GM12878 (cell line): ENCODE measurements at regions of chr2 and their contacts with region 1.

Region 1: DNA sequence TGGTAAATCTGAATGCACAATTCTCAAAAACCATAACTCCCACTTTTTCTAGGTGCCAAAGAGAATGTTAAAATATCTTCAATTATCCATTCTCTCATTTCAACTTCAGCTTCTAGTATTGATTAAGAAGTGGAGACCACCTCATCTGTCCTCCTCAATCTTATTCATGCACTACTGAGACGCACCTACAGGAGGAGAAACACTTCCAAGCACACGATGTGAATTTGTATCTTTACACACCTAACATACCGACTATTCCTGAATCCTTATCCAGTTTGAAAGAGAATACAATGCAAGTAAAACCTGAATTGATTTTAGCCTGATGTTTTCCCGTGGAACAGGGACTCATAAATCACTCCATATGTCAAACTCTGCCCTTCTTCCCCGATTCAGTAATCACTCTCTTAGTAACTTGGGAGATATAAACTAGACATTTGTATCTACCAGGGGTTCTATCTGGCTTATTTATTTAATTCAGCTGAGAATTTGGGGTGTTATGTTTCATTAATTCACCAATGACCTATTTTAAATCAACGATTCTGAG is 101.0 kb downstream of the MREG start:
- DNase-seq: no peak
- ATAC-seq: no peak
- H3K4me3 ChIP-seq: no peak overlapping the region
- H3K27ac ChIP-seq: no peak overlapping the region
- H3K4me1 ChIP-seq: peaks cover 10% of the 10 kb centered on the region; the same call in 1 of the 2 replicates
- H3K27me3 ChIP-seq: no peaks in the 10 kb centered on the region
- CTCF ChIP-seq: no peak
- EP300 ChIP-seq: no peak
- POLR2A ChIP-seq: no peak
- RAD21 ChIP-seq: no peak

Region 2: GRCh38 chr2:215454519-215455246 is 457.7 kb before region 1 on chr2:
- CTCF ChIA-PET with region 1: interaction called, 14 read pairs
- POLR2A ChIA-PET with region 1: no interaction called
- RAD21 ChIA-PET with region 1: interaction called, 5 read pairs
- SMC1A ChIA-PET with region 1: interaction called, 30 read pairs
- in situ Hi-C with region 1: loop called (anchors 25 kb)
- intact Hi-C with region 1: no loop called
- DNase-seq: no peak
- ATAC-seq: peak; percentile 67
- H3K4me3 ChIP-seq: no peak overlapping the region
- H3K27ac ChIP-seq: no peak overlapping the region
- H3K4me1 ChIP-seq: no peaks in the 10 kb centered on the region
- H3K27me3 ChIP-seq: no peaks in the 10 kb centered on the region
- CTCF ChIP-seq: peak; percentile 71 to 81 (median 71)
- EP300 ChIP-seq: no peak
- POLR2A ChIP-seq: no peak
- RAD21 ChIP-seq: peak; percentile 77

Region 3: DNA sequence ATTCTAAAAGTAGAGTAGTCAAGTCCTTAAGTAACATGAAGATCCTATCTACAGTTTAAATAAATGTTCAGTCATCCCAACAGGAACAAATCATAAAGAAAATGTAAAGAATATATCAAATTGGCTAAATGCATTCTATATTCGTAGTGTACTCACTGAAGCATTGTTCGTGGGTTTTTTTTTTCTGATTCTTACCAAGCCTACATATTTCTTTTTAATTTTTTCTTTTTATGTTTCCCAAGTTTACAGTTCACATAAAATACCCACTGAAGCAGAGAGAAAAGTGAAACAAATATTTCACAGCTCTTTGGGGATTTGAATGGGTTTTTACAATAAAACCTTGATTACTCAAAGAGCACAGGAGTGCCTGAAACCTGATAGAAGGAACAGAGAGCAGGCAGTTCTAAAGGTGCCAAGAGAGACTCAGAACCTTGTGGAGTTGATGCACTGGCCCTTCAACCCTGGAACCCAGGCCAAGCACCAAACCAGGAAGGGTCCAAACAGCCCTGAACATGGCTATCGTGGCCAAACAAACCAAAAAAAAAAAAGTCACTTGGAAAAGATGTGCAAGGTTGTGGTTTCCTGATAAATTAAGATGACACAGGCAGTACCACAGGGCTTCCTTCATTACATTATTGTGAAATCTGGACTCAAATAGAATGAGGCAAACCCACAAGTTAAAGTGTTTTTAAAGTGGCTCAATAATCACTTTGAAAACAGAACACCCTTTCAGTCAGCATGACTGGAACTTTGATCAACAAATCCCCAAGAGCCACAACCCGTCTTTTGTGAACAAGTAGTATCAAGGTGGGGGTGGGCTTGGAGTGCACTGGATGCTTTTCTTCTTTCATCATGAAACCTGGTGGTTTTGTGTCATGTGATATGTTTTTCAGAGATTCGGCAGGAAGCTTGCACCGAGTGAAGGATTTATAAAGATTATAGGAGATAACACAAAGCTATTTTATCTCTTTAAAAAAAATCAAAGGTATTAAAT is 231.5 kb before region 1 on chr2:
- CTCF ChIA-PET with region 1: no interaction called
- POLR2A ChIA-PET with region 1: no interaction called
- RAD21 ChIA-PET with region 1: interaction called, 20 read pairs
- SMC1A ChIA-PET with region 1: interaction called, 23 read pairs
- in situ Hi-C with region 1: no loop called
- intact Hi-C with region 1: loop called (anchors 1 kb)
- DNase-seq: peak; percentile 50
- ATAC-seq: peak; percentile 94
- H3K4me3 ChIP-seq: 0 out of 2 replicates have a peak overlapping the region, but pooled peaks have one; percentile 5
- H3K27ac ChIP-seq: no peak overlapping the region
- H3K4me1 ChIP-seq: no peaks in the 10 kb centered on the region
- H3K27me3 ChIP-seq: no peaks in the 10 kb centered on the region
- CTCF ChIP-seq: no peak
- EP300 ChIP-seq: peak; percentile 44 to 45; a peak in 2 of 4 replicates
- POLR2A ChIP-seq: no peak
- RAD21 ChIP-seq: no peak

Region 4: DNA sequence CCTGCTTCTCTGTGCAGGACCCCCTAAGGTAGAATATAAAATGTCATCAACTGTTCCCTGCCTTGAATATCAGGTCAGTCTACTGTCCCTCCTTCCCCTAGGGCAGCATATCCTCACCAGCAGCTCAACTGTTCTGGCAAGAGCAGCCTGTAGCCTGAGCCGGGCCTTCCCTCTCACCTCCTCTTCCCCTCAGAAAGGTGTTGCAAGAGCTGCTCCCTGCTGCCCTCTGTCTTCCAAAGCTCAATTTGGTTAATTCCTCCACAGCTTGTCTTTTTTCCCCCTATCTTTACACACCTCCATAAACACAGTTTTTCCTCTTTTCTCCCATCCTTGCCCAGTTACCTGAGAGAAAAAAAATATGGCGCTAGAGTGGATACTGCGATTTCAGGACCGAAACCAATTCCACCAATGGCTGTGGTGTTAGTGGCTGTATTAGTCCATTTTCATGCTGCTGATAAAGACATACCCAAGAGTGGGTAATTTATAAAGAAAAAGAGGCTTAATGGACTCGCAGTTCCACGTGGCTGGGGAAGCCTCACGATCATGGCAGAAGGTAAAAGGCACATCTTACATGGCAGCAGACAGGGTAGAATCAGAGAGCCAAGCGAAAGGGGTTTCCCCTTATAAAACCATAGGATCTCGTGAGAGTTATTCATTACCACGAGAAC is 83.7 kb before region 1 on chr2:
- CTCF ChIA-PET with region 1: interaction called, 7 read pairs
- POLR2A ChIA-PET with region 1: no interaction called
- RAD21 ChIA-PET with region 1: interaction called, 14 read pairs
- SMC1A ChIA-PET with region 1: interaction called, 12 read pairs
- in situ Hi-C with region 1: no loop called
- intact Hi-C with region 1: loop called (anchors 2 kb)
- DNase-seq: no peak
- ATAC-seq: peak; percentile 80
- H3K4me3 ChIP-seq: no peak overlapping the region
- H3K27ac ChIP-seq: no peak overlapping the region
- H3K4me1 ChIP-seq: peaks cover 5% of the 10 kb centered on the region
- H3K27me3 ChIP-seq: no peaks in the 10 kb centered on the region
- CTCF ChIP-seq: peak; percentile 54 to 73 (median 68)
- EP300 ChIP-seq: no peak
- POLR2A ChIP-seq: no peak
- RAD21 ChIP-seq: peak; percentile 80

Region 5: GRCh38 chr2:215880970-215881369 is 31.4 kb before region 1 on chr2:
- CTCF ChIA-PET with region 1: interaction called, 10 read pairs
- POLR2A ChIA-PET with region 1: interaction called, 8 read pairs
- RAD21 ChIA-PET with region 1: interaction called, 76 read pairs
- SMC1A ChIA-PET with region 1: interaction called, 185 read pairs
- in situ Hi-C with region 1: no loop called
- intact Hi-C with region 1: loop called (anchors 5 kb)
- DNase-seq: peak; percentile 38
- ATAC-seq: peak; percentile 82
- H3K4me3 ChIP-seq: no peak overlapping the region
- H3K27ac ChIP-seq: no peak overlapping the region
- H3K4me1 ChIP-seq: peaks cover 15% of the 10 kb centered on the region
- H3K27me3 ChIP-seq: no peaks in the 10 kb centered on the region
- CTCF ChIP-seq: no peak
- EP300 ChIP-seq: no peak
- POLR2A ChIP-seq: no peak
- RAD21 ChIP-seq: no peak

Region 6: GRCh38 chr2:215900203-215900611 is 12.2 kb before region 1 on chr2:
- CTCF ChIA-PET with region 1: interaction called, 16 read pairs
- POLR2A ChIA-PET with region 1: interaction called, 12 read pairs
- RAD21 ChIA-PET with region 1: interaction called, 19 read pairs
- SMC1A ChIA-PET with region 1: interaction called, 29 read pairs
- in situ Hi-C with region 1: no loop called
- intact Hi-C with region 1: no loop called
- DNase-seq: no peak
- ATAC-seq: no peak
- H3K4me3 ChIP-seq: no peak overlapping the region
- H3K27ac ChIP-seq: no peak overlapping the region
- H3K4me1 ChIP-seq: no peaks in the 10 kb centered on the region
- H3K27me3 ChIP-seq: no peaks in the 10 kb centered on the region
- CTCF ChIP-seq: no peak
- EP300 ChIP-seq: no peak
- POLR2A ChIP-seq: no peak
- RAD21 ChIP-seq: no peak

Region 7: GRCh38 chr2:215942194-215942593 is 29.8 kb after region 1 on chr2:
- CTCF ChIA-PET with region 1: no interaction called
- POLR2A ChIA-PET with region 1: no interaction called
- RAD21 ChIA-PET with region 1: no interaction called
- SMC1A ChIA-PET with region 1: no interaction called
- in situ Hi-C with region 1: no loop called
- intact Hi-C with region 1: no loop called
- DNase-seq: no peak
- ATAC-seq: peak; percentile 47; the same call in 1 of the 3 replicates
- H3K4me3 ChIP-seq: no peak overlapping the region
- H3K27ac ChIP-seq: no peak overlapping the region
- H3K4me1 ChIP-seq: no peaks in the 10 kb centered on the region
- H3K27me3 ChIP-seq: no peaks in the 10 kb centered on the region
- CTCF ChIP-seq: no peak
- EP300 ChIP-seq: no peak
- POLR2A ChIP-seq: no peak
- RAD21 ChIP-seq: no peak

Region 8: GRCh38 chr2:216151313-216152030 is 239.1 kb after region 1 on chr2:
- CTCF ChIA-PET with region 1: no interaction called
- POLR2A ChIA-PET with region 1: no interaction called
- RAD21 ChIA-PET with region 1: no interaction called
- SMC1A ChIA-PET with region 1: no interaction called
- in situ Hi-C with region 1: no loop called
- intact Hi-C with region 1: no loop called
- DNase-seq: no peak
- ATAC-seq: no peak
- H3K4me3 ChIP-seq: no peak overlapping the region
- H3K27ac ChIP-seq: no peak overlapping the region
- H3K4me1 ChIP-seq: no peaks in the 10 kb centered on the region
- H3K27me3 ChIP-seq: no peaks in the 10 kb centered on the region
- CTCF ChIP-seq: peak in 1 of 3 experiments; percentile 13; a peak in 2 of 6 replicates
- EP300 ChIP-seq: no peak
- POLR2A ChIP-seq: no peak
- RAD21 ChIP-seq: no peak